Heart left ventricle (tissue), 16 donors: ENCODE measurements at regions of chr11 and their contacts with region 1.

Region 1: GRCh38 chr11:72102946-72103753 is at the start of gene LAMTOR1:
- DNase-seq: peak; percentile 99 to 100 (median 99)
- ATAC-seq: peak; percentile 98 to 100 (median 99)
- H3K4me3 ChIP-seq: peak within 1 kb of the TSS; percentile 70 to 98 (median 90)
- H3K27ac ChIP-seq: peak within 1 kb of the TSS; percentile 91 to 99 (median 96)
- H3K4me1 ChIP-seq: peaks cover 7 to 48% (median 32%) of the 10 kb centered on the region in 12 donors
- H3K27me3 ChIP-seq: no peaks in the 10 kb centered on the region
- CTCF ChIP-seq: peak in 9 of 12 donors; percentile 29 to 60 (median 48)
- POLR2A ChIP-seq: peak in 1 of 2 donors; percentile 64
- total RNA-seq, gene LAMTOR1: 68.7 to 119 (median 84.8) TPM

Region 2: GRCh38 chr11:71928737-71929452 is 174.3 kb before region 1 on chr11 and contains the start of gene RNF121:
- intact Hi-C with region 1: loop called in 1 of 10 experiments (anchors 5 kb)
- DNase-seq: peak; percentile 98
- ATAC-seq: peak; percentile 99 to 100 (median 99)
- H3K4me3 ChIP-seq: peak within 1 kb of the TSS; percentile 67 to 93 (median 82)
- H3K27ac ChIP-seq: peak within 1 kb of the TSS; percentile 83 to 97 (median 88)
- H3K4me1 ChIP-seq: peaks cover 4 to 52% (median 30%) of the 10 kb centered on the region in 12 donors
- H3K27me3 ChIP-seq: no peaks in the 10 kb centered on the region
- CTCF ChIP-seq: no peak
- POLR2A ChIP-seq: peak in 1 of 2 donors; percentile 50
- total RNA-seq, gene RNF121: 15.4 to 28.2 (median 22.0) TPM

Region 3: DNA sequence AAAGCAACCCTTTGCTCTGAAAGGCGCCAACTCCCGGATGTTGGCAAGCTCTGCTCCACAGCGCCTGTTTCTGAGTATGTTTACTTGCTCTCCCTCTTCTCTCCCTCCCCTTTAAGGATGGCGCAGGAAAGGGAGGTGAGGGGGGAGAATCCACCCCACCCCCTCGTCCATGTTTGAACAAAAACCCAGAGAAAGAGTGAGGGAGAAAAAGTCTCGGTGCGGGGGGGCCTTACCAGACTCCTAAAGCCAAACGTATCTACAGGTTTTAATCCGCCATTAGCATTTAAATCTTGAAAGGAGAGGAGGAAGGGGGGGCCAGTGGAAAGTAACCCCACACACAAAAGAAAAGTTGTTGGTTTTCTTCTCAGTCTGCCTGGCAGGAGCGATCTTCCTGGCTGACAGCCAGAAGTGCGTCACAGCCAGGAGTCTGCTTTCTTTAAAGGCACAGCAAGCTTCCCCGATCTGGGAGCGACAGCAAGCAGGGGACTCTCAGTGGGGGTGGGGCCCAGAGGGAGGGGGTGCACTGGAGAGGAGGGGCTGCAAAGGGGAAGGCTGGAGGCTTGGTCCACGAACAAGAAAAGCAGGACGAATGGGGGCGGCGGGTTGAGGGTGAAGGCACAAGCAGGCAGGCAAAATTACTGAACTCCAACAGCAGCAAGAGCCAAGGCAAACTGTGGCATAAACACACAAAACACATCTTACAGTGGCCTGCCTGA is 62.3 kb before region 1 on chr11:
- intact Hi-C with region 1: loop called in 1 of 10 experiments (anchors 1 kb)
- DNase-seq: peak; percentile 95 to 98 (median 95)
- ATAC-seq: peak; percentile 79 to 87 (median 85)
- H3K4me3 ChIP-seq: peak overlapping the region; percentile 48 to 82 (median 64)
- H3K27ac ChIP-seq: peak overlapping the region; percentile 94 to 100 (median 98)
- H3K4me1 ChIP-seq: peaks cover 19 to 63% (median 52%) of the 10 kb centered on the region in 12 donors
- H3K27me3 ChIP-seq: no peaks in the 10 kb centered on the region
- CTCF ChIP-seq: no peak
- POLR2A ChIP-seq: no peak

Region 4: GRCh38 chr11:72080256-72080974 is 22.7 kb before region 1 on chr11 and contains the starts of genes LRRC51 and NUMA1:
- intact Hi-C with region 1: loop called in 1 of 10 experiments (anchors 1 kb)
- DNase-seq: peak; percentile 99 to 100 (median 99)
- ATAC-seq: peak; percentile 97 to 99 (median 98)
- H3K4me3 ChIP-seq: peak within 1 kb of the TSS; percentile 70 to 94 (median 82)
- H3K27ac ChIP-seq: peak within 1 kb of the TSS; percentile 81 to 93 (median 87)
- H3K4me1 ChIP-seq: peaks cover 0 to 44% (median 16%) of the 10 kb centered on the region in 12 donors
- H3K27me3 ChIP-seq: no peaks in the 10 kb centered on the region
- CTCF ChIP-seq: no peak
- POLR2A ChIP-seq: peak in 1 of 2 donors; percentile 65
- total RNA-seq, gene LRRC51: 2.0 to 8.3 (median 4.5) TPM
- total RNA-seq, gene NUMA1: 62.7 to 193 (median 101) TPM

Region 5: DNA sequence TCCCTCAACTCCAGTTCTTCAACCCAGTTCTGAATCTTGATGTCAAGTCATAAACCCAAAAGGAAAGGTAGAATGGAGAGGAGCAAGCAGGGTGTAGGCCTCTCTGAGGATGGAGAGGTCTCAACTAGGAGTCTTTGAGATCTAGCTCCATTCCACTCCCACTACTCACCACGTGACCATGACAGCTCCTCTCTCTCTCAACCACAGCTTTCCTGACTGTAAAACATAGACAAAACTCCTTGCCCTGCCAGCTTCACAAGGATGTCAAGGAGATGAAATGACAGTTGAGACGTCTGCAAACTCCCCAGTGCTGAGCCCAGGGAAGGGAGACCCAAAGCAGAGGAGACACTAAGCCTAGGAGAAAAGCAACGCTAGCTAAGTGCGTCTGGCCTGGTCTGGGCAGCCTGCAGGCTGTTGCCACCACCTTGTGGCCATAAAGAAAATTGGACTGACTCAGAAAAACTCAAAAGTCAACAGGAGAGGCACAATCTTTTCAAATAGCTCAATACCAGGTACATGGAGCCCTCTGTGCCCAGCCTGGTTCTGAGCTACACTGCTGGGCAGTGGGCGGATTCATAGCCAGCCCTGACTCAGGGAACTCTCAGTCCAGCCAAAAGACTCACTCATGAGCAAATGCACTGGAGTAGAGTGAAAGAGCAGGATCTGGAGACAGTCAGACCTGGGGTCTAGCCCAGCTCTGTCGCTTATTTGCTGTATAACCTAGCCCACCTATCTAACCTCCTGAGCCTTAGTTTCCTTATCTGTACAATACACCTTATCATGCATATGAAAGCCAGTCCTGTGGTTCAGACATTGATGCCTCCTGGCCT is 327.8 kb after region 1 on chr11:
- intact Hi-C with region 1: loop called in 1 of 10 experiments (anchors 10 kb)
- DNase-seq: peak in 3 of 5 donors; percentile 44 to 49 (median 46)
- ATAC-seq: peak in 2 of 4 donors; percentile 16 to 31
- H3K4me3 ChIP-seq: no peak overlapping the region
- H3K27ac ChIP-seq: no peak overlapping the region
- H3K4me1 ChIP-seq: peaks cover 0 to 41% (median 14%) of the 10 kb centered on the region in 12 donors
- H3K27me3 ChIP-seq: no peaks in the 10 kb centered on the region
- CTCF ChIP-seq: peak; percentile 61 to 81 (median 72)
- POLR2A ChIP-seq: no peak